ENCODE measurements at regions of chr2 and their contacts with region 1.

Region 1: GRCh38 chr2:70070541-70071268 is 16.6 kb upstream of the PCBP1 start:
- H3K4me3 Mint-ChIP-seq: peak overlapping the region; percentile 20
- H3K27ac Mint-ChIP-seq: peak overlapping the region; percentile 90
- H3K4me1 Mint-ChIP-seq: peaks cover 38% of the 10 kb centered on the region
- H3K27me3 Mint-ChIP-seq: no peaks in the 10 kb centered on the region

Region 2: GRCh38 chr2:69914170-69914960 is 156.3 kb before region 1 on chr2:
- intact Hi-C with region 1: loop called (anchors 2 kb)
- H3K4me3 Mint-ChIP-seq: peak overlapping the region; percentile 83
- H3K27ac Mint-ChIP-seq: peak overlapping the region; percentile 91
- H3K4me1 Mint-ChIP-seq: peaks cover 15% of the 10 kb centered on the region
- H3K27me3 Mint-ChIP-seq: no peaks in the 10 kb centered on the region

Region 3: GRCh38 chr2:70248181-70248847 is 177.6 kb after region 1 on chr2 and contains the start of gene TIA1:
- intact Hi-C with region 1: no loop called
- H3K4me3 Mint-ChIP-seq: peak within 1 kb of the TSS; percentile 87
- H3K27ac Mint-ChIP-seq: peak within 1 kb of the TSS; percentile 97
- H3K4me1 Mint-ChIP-seq: peaks cover 25% of the 10 kb centered on the region
- H3K27me3 Mint-ChIP-seq: no peaks in the 10 kb centered on the region

Region 4: GRCh38 chr2:70328921-70329561 is 258.3 kb after region 1 on chr2:
- intact Hi-C with region 1: no loop called
- H3K4me3 Mint-ChIP-seq: no peak overlapping the region
- H3K27ac Mint-ChIP-seq: no peak overlapping the region
- H3K4me1 Mint-ChIP-seq: no peaks in the 10 kb centered on the region
- H3K27me3 Mint-ChIP-seq: peaks cover 3% of the 10 kb centered on the region

Region 5: GRCh38 chr2:70381831-70382267 is 311.1 kb after region 1 on chr2:
- intact Hi-C with region 1: no loop called
- H3K4me3 Mint-ChIP-seq: no peak overlapping the region
- H3K27ac Mint-ChIP-seq: no peak overlapping the region
- H3K4me1 Mint-ChIP-seq: no peaks in the 10 kb centered on the region
- H3K27me3 Mint-ChIP-seq: peaks cover 5% of the 10 kb centered on the region

Measured in dendritic cell treated with granulocyte-macrophage colony-stimulating factor and Interleukin-4, amounts not matched to agents 40 ng/mL and 50 ng/mL, for 4 days (primary cell).